ENCODE measurements at regions of chr18 and their contacts with region 1.

Region 1: DNA sequence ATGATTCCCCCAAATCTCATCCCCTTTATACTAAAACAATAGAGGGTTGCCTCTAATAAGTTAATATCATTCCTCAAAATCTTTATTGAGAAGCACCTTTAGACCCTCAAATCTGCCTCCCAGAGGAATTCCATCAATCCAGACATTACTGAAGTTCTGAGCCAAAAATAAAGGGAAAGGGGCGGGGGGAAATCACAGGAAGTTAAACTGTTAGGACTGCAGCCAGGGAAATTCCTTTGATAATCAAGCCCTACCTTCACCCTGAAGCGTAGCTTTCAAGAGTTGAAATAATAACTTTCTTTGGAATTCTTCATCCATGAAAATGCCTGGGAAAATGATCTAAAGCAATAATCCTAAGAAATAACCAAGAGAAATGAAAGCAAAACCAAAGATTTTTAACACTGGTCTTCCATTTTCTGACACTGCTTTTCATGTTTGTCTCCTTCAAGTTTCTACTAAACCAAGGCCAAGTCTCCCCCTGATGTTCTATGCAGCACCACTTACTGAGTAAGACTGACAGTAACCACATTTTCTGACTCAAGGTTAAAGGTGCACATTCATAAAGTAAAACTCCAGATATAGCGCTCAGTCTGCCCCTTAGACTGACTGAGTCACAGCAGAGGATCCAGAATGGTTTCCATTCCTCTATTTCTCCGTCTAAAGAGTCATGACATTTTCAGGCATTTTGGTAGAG is 78.2 kb downstream of the TCF4 start:
- DNase-seq: no peak

Region 2: DNA sequence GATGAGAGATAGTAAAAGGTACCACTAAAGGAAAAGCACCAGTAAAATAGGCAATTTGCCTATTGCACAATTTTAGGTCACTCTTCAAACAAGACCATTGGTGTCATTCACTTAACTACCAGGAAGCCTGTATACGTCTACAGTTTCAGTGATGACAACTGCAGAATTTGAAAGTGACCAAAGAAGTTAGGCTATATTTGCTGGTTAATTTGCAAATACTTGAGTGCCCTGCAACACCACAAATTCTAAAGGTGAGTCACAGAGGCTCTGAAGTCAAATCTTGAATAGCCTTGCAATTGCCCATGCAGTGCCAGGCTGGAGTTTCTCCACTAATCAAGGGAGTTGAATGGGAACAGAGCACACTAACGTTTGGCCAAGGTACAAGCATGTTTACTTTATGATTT is 421.8 kb before region 1 on chr18:
- intact Hi-C with region 1: no loop called
- DNase-seq: no peak

Region 3: DNA sequence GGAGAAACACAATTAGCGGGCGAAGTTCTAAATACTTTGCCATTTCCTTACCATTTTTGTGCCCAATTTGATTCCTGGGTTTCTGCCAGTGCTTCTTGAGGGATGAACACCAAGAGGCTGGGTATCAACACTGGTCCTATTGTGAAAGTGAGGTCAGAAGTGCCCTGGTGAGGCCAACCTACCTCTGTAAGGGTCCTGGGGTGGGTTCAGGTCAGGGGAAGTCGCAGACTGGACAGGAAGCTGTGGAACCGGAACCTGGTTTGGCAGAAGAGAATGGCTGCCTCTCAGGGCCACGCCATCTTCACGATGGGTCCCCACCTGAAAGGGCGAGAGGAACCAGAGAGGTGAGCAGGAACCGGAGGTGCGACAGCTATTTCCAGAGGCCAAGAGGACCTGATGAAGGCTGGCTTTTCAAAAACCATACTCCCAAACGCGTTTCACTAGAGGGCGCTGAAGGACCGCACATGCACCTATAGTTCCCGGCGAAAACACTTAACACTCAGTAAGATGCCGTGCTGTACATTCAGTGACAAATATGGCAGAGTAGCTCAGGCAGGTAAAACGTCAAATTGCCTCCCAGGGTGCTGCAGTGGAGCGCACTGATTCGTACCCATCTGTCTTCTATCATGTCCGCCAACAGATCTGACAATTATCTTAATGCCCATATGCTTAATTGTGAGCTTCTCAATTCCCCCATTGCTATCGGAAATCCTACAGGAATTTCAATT is 275.2 kb before region 1 on chr18:
- intact Hi-C with region 1: loop called (anchors 10 kb)
- DNase-seq: peak; percentile 76

Region 4: GRCh38 chr18:55422456-55423180 is 87.2 kb before region 1 on chr18:
- intact Hi-C with region 1: loop called (anchors 5 kb)
- DNase-seq: no peak

Region 5: GRCh38 chr18:55546851-55547704 is 37.3 kb after region 1 on chr18:
- intact Hi-C with region 1: no loop called
- DNase-seq: no peak